Vagina (tissue), 2 donors: ENCODE measurements at regions of chr11 and their contacts with region 1.

Region 1: DNA sequence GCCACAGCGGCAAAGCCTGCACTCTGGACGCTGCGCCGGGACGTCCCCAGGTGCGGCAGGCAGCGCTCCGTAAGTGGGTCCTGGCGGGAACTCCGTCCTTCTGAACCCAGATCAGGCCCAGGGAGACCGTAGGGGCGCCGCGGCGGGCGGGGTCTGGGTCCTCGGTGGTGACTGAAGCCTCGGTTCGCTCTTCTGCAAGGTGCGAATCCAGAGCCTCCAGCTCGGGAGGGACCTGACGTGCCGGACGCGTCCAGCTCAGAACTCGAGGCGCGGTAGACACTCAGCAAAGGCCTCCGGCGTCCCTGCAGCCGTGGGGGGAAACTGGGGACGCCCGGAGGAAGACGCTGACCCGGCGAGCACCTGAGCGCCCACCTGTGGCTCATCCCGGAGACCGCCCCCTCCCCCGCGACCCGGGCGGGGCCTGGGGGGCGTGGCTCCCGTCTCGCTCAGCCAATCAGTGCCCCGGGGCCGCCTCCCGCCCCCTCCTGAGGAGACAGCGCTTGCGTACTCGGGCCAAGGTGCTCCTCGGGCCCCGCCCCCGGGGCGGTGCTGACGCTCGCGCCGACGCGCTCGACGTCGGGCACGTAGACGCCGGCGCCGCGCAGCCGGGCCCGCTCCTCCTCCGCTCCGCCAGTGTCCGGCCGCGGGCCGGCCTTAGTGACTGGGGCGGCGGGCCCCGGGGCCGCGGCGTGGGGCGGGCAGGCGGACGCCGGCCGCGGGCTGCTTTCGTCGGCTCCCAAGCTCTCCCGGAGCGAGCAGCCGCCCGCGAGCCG is at the start of gene PPFIA1:
- DNase-seq: peak in 1 of 2 donors; percentile 94
- H3K4me3 ChIP-seq: peak within 1 kb of the TSS; percentile 77 to 97
- H3K27ac ChIP-seq: peak within 1 kb of the TSS; percentile 72
- H3K4me1 ChIP-seq: peaks cover 33% of the 10 kb centered on the region
- H3K27me3 ChIP-seq: no peaks in the 10 kb centered on the region
- CTCF ChIP-seq: no peak
- POLR2A ChIP-seq: peak in 1 of 2 donors; percentile 90
- total RNA-seq, gene PPFIA1: 54.3 TPM

Region 2: DNA sequence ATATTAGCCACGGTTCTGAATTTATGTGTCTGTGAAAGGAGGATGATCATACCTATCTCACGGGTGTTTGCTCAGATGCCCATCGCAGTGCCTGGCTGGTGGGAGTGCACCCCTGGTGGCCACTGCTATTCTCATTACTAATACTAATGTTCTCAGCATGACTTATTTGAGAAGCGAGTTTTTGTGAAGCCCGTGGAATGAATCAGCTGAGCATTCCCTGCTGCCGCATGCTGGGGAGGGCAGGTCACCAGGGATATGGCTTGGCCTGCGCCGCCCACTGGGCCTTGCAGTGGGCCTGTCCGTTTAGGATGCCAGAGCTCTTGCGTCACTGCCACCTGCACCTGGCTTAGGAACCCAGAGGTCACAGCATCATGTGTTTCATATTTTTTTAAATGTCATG is 144.9 kb after region 1 on chr11:
- intact Hi-C with region 1: loop called (anchors 10 kb)
- DNase-seq: no peak
- H3K4me3 ChIP-seq: no peak overlapping the region
- H3K27ac ChIP-seq: no peak overlapping the region
- H3K4me1 ChIP-seq: no peaks in the 10 kb centered on the region
- H3K27me3 ChIP-seq: no peaks in the 10 kb centered on the region
- CTCF ChIP-seq: no peak
- POLR2A ChIP-seq: no peak